ENCODE measurements at regions of chr9 and their contacts with region 1.

Region 1: DNA sequence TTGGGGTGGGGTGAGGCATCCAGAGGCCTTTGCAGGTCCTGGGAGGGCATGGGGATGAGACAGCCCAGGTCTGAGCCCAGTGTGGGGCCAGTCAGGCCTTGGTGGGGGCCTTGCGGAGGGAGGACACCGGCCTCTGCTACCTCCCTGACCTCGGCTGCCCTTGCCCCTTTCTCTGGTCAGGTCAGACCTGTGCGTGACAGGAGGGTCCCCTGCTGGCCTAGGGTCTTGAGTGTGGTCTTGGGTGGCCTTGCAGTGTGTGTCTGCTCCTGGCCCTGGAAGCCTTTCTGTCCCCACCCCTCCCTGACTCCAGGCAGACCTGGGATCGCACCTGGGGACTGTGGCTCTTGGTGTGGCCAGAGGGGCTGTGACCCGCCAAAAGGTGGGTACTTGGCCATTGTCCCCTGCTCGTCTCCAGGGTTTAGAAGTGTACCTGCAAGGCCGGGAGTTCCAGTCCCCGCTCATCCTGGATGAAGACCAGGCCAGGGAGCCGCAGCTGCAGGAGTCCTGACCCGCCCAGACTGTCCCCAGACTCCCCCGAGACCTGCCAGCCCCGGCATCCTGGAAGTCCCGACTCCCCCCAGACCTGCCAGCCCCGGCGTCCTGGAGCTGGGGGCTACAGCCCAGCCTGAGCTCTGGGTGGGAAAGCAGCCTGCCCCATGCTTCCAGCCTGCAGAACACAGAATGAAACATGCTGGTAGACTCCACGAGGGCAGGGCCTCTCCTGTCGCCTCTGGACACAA is 4.4 kb upstream of the MAN1B1 start:
- DNase-seq: no peak
- ATAC-seq: no peak
- H3K4me3 ChIP-seq: no peak overlapping the region
- H3K27ac ChIP-seq: no peak overlapping the region
- H3K4me1 ChIP-seq: peaks cover 31% of the 10 kb centered on the region
- H3K27me3 ChIP-seq: no peaks in the 10 kb centered on the region
- CTCF ChIP-seq: no peak

Region 2: GRCh38 chr9:136769710-136770191 is 312.6 kb before region 1 on chr9:
- CTCF ChIA-PET with region 1: no interaction called
- POLR2A ChIA-PET with region 1: no interaction called
- in situ Hi-C with region 1: no loop called
- intact Hi-C with region 1: no loop called
- DNase-seq: no peak
- ATAC-seq: peak; percentile 89
- H3K4me3 ChIP-seq: peak overlapping the region in 1 of 2 experiments; percentile 24; a peak in 1 of 4 replicates
- H3K27ac ChIP-seq: no peak overlapping the region
- H3K4me1 ChIP-seq: no peaks in the 10 kb centered on the region
- H3K27me3 ChIP-seq: no peaks in the 10 kb centered on the region
- CTCF ChIP-seq: no peak; the same call in 1 of the 2 replicates

Region 3: DNA sequence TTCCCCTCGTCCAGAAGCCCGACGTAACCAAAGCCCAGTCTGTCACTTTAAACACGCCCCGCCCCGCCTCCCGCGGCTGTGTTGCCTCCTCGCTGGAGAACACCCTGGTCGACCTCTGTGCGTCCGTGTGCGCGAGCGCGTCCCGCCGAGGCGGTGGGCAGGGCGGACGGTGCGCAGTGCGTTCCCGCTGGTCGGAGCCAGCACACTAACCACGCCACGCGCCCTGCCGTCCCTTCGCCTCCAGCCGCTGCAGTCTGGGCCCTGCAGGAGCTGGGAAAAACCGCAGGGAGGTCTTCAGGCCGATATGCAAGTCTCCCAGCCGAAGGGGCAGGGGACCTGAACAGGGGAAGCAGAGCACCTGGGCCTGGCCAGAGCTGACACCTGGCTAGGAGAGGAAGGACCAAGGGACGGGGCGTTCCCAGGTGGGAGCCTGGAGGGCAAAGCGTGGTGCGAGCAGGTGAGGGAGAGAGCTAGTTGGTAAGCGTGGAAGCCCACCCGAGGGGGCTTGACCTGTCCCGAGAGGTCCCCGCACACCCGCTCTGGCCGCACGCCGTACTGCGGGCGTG is 234.5 kb before region 1 on chr9:
- CTCF ChIA-PET with region 1: no interaction called
- POLR2A ChIA-PET with region 1: interaction called, 10 read pairs
- in situ Hi-C with region 1: no loop called
- intact Hi-C with region 1: no loop called
- DNase-seq: no peak
- ATAC-seq: peak; percentile 59
- H3K4me3 ChIP-seq: peak overlapping the region; percentile 69 to 83
- H3K27ac ChIP-seq: peak overlapping the region; percentile 83
- H3K4me1 ChIP-seq: peaks cover 15% of the 10 kb centered on the region
- H3K27me3 ChIP-seq: no peaks in the 10 kb centered on the region
- CTCF ChIP-seq: no peak

Region 4: DNA sequence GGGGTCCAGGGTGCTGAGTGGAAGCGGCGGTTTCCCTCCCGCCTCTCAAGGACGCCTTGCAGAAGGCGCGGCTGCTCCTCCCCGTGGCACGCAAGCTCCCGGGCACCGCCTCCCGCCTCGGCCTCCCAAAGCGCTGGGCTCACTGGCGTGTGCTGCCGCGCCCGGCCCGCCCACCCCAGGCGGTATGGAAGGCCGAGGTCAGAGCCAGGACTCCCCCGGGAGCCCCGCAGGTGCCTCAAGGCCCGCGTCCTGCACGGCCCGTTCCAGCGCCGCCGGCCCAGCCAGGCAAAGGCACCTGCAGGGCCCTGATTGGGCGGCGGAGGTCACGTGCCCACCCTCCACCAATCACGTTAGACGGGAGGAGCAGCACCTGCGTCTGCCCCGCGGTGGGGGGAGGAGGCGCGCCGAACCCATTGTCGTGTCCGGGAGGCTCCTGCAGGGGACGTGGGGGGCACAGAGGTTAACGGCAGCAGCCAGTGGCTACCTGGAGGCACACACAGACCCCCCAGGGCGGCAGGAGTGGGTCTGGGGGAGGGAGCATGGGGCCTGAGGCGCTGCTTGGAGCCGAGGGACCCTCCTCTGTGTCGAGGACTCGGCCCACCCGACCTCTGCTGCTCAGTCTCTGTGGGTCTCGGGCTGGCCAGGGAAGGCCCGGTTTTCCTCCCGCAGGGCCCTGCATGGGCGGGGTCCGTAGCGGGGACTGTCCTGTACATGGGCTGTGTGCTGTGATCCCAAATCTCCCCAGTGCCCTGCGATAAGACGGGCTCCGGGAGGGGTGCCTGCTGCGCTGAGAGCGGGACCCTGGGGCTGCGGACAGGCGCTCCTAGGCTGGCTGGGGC is 132.4 kb before region 1 on chr9:
- CTCF ChIA-PET with region 1: no interaction called
- POLR2A ChIA-PET with region 1: no interaction called
- in situ Hi-C with region 1: no loop called
- intact Hi-C with region 1: no loop called
- DNase-seq: peak; percentile 46
- ATAC-seq: peak; percentile 87
- H3K4me3 ChIP-seq: peak overlapping the region; percentile 48 to 63
- H3K27ac ChIP-seq: peak overlapping the region; percentile 87
- H3K4me1 ChIP-seq: peaks cover 30% of the 10 kb centered on the region
- H3K27me3 ChIP-seq: no peaks in the 10 kb centered on the region
- CTCF ChIP-seq: no peak

Region 5: GRCh38 chr9:137138722-137139467 is 56.5 kb after region 1 on chr9 and contains the start of gene GRIN1:
- CTCF ChIA-PET with region 1: no interaction called
- POLR2A ChIA-PET with region 1: no interaction called
- in situ Hi-C with region 1: no loop called
- intact Hi-C with region 1: no loop called
- DNase-seq: no peak
- ATAC-seq: no peak
- H3K4me3 ChIP-seq: no peak within 1 kb of the TSS
- H3K27ac ChIP-seq: no peak within 1 kb of the TSS
- H3K4me1 ChIP-seq: no peaks in the 10 kb centered on the region
- H3K27me3 ChIP-seq: no peaks in the 10 kb centered on the region
- CTCF ChIP-seq: no peak
- total RNA-seq, gene GRIN1: 4.9 TPM

Region 6: GRCh38 chr9:137223078-137223970 is 140.9 kb after region 1 on chr9:
- CTCF ChIA-PET with region 1: no interaction called
- POLR2A ChIA-PET with region 1: no interaction called
- in situ Hi-C with region 1: no loop called
- intact Hi-C with region 1: no loop called
- DNase-seq: peak; percentile 88
- ATAC-seq: peak; percentile 72
- H3K4me3 ChIP-seq: peak overlapping the region; percentile 67 to 72
- H3K27ac ChIP-seq: peak overlapping the region; percentile 82
- H3K4me1 ChIP-seq: peaks cover 25% of the 10 kb centered on the region
- H3K27me3 ChIP-seq: no peaks in the 10 kb centered on the region
- CTCF ChIP-seq: no peak

Measured in Panc1 (cell line).